ENCODE measurements at regions of chr2 and their contacts with region 1.

Region 1: GRCh38 chr2:70570041-70570663 is 16.5 kb upstream of the TGFA start:
- DNase-seq: peak; percentile 94
- H3K4me3 Mint-ChIP-seq: peak overlapping the region; percentile 5
- H3K27ac Mint-ChIP-seq: peak overlapping the region; percentile 93
- H3K4me1 Mint-ChIP-seq: peaks cover 33% of the 10 kb centered on the region
- H3K27me3 Mint-ChIP-seq: no peaks in the 10 kb centered on the region
- CTCF ChIP-seq: no peak

Region 2: DNA sequence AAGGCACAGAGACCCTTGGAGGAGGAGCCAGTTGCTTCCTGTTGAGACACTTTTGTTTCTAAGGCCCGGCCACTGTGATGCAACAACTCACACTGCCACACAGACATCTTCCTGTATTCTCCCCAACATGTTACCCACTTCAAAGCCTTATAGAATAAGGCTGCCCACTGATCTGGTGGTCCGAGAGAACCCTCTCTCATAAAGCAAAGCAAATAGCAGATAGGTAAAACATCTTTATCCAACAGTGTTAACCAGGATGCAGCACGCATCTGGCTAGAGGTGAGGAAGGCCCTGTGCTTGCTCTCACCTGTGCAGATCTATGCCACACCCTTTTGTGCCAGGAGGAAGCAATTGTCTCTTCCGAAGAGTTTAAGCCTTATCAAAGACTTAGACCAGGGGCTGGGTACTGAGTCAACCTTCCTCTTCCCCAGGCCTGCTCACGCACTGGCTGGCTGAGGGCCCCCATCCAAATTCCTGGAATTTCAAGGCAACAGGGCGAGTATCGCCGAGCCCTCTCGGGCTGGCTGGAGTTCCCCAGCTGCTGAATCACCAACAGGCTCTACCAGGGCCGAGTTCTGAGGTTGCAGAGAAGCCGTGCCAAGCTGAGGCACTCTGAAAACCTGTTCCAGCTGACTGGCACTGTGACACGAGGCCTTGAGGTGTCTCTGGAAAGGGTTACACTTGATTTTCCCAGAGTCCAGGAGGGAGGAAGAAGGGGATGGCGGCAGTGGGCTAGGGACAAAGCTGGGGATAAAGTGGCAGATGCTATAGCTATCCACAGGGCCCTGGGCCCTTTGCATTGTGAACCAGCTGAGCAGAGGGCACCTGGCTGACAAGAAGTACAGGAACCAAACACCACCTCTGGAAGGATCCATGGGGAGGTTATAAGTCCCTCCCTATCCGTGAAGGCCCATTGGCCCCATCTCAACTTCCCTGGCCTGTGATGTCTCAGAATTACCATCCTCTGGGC is 45.9 kb before region 1 on chr2:
- CTCF ChIA-PET with region 1: interaction called, 3 read pairs
- POLR2A ChIA-PET with region 1: interaction called, 13 read pairs
- intact Hi-C with region 1: no loop called
- DNase-seq: peak; percentile 95
- H3K4me3 Mint-ChIP-seq: peak overlapping the region; percentile 49
- H3K27ac Mint-ChIP-seq: peak overlapping the region; percentile 84
- H3K4me1 Mint-ChIP-seq: peaks cover 43% of the 10 kb centered on the region
- H3K27me3 Mint-ChIP-seq: no peaks in the 10 kb centered on the region
- CTCF ChIP-seq: no peak

Region 3: DNA sequence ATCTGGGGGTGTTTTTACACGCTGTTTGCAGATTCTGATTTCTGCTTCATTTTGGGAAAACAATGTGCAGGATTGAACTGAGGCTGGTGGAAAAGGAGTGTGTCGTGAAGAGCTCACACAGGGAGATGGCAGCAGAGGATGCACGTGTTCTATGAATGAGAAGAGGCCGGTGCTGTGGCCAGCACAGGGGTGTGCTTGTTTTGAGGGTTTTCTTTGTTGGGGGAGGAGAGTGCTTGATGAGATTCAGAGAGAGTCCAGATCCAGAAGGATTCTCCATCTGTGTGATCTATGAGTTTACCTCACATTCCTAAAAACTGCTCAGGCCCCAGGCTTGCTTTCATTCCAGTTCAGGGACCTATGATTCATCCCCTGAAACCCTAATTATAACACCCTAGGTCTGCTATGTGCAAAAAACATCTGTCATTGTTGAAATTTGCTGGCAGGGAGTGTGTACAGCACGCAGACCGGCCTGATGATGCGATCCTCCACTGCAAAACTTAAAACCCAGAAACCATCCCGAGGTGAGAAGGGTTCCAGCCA is 28.6 kb before region 1 on chr2:
- CTCF ChIA-PET with region 1: interaction called, 3 read pairs
- POLR2A ChIA-PET with region 1: interaction called, 10 read pairs
- intact Hi-C with region 1: no loop called
- DNase-seq: peak; percentile 87
- H3K4me3 Mint-ChIP-seq: peak overlapping the region; percentile 56
- H3K27ac Mint-ChIP-seq: peak overlapping the region; percentile 76
- H3K4me1 Mint-ChIP-seq: peaks cover 24% of the 10 kb centered on the region
- H3K27me3 Mint-ChIP-seq: no peaks in the 10 kb centered on the region
- CTCF ChIP-seq: peak; percentile 19

Region 4: DNA sequence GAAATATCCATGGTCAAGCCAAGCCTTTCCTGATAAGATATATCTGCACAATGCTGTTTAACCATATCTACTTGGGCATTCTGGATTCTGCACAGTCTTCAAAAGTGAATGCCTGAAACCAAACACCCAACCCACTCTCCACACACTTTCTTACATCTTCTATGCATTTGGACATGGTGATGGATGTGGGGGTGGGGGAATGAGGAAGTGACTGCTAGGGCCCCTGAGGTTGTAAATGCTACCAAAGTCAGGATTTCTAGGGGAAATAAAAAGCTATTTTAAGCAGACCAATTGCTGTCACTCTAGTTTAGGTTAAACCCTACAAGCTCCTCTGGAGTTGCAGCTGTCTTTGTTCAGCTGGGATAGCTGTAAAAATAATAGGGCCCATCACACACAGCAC is 10.2 kb after region 1 on chr2:
- CTCF ChIA-PET with region 1: interaction called, 4 read pairs
- POLR2A ChIA-PET with region 1: interaction called, 15 read pairs
- intact Hi-C with region 1: no loop called
- DNase-seq: no peak
- H3K4me3 Mint-ChIP-seq: no peak overlapping the region
- H3K27ac Mint-ChIP-seq: no peak overlapping the region
- H3K4me1 Mint-ChIP-seq: no peaks in the 10 kb centered on the region
- H3K27me3 Mint-ChIP-seq: no peaks in the 10 kb centered on the region
- CTCF ChIP-seq: no peak

Region 5: GRCh38 chr2:70596739-70597138 is 26.6 kb after region 1 on chr2:
- CTCF ChIA-PET with region 1: interaction called, 3 read pairs
- POLR2A ChIA-PET with region 1: interaction called, 26 read pairs
- intact Hi-C with region 1: no loop called
- DNase-seq: no peak
- H3K4me3 Mint-ChIP-seq: no peak overlapping the region
- H3K27ac Mint-ChIP-seq: peak overlapping the region; percentile 97
- H3K4me1 Mint-ChIP-seq: peaks cover 18% of the 10 kb centered on the region
- H3K27me3 Mint-ChIP-seq: no peaks in the 10 kb centered on the region
- CTCF ChIP-seq: no peak

Region 6: DNA sequence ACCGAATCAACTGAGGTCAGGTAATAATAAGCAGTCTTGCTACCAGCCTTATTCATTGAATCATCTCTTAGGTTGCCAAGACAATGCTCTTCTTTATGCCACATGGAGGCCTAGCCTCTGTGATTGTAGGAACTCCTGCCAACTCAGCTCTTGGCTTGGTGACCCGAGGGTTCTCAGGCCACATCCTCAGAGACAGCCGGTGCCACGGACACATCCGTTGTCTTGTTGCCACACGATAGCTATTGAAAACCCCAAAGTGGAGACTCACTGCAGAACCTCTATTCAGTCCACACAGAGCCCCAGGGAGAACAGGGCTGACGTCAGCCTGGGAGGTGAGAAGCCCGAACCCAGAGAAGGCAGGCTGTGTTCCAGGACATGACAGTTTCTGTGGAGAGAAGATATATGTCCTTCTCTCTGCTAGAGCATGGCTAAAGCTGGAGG is 37.0 kb after region 1 on chr2:
- CTCF ChIA-PET with region 1: no interaction called
- POLR2A ChIA-PET with region 1: interaction called, 10 read pairs
- intact Hi-C with region 1: no loop called
- DNase-seq: peak; percentile 85
- H3K4me3 Mint-ChIP-seq: no peak overlapping the region
- H3K27ac Mint-ChIP-seq: peak overlapping the region; percentile 82
- H3K4me1 Mint-ChIP-seq: peaks cover 18% of the 10 kb centered on the region
- H3K27me3 Mint-ChIP-seq: no peaks in the 10 kb centered on the region
- CTCF ChIP-seq: no peak

Measured in MCF 10A (cell line).